ENCODE measurements at regions of chr19 and their contacts with region 1.

Region 1: DNA sequence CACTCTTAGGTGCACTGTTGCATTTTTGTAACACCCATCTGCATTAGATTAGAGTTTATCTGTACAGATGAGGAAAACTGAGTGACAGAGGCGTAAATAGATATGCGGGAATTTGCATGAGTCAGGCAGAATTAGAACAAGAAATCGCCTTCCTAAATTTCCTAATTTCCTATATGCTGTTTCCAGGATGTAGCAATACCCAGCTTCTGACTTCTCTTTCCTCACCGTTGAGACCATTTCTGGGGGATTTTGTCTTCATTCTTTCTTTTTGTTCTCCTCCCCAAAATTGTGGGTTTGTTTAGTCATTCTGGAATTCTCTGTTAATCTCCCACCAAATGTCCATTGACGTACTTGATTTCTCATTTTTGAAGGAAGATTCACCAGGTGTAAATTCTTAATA is 10.6 kb upstream of the ZNF792 start:
- DNase-seq: no peak
- H3K4me3 ChIP-seq: no peak overlapping the region
- H3K27ac ChIP-seq: no peak overlapping the region
- H3K4me1 ChIP-seq: no peaks in the 10 kb centered on the region
- H3K27me3 ChIP-seq: peaks cover 6% of the 10 kb centered on the region; the same call in 1 of the 2 replicates
- CTCF ChIP-seq: no peak
- EP300 ChIP-seq: no peak
- RAD21 ChIP-seq: no peak

Region 2: GRCh38 chr19:34838753-34839431 is 135.8 kb before region 1 on chr19:
- CTCF ChIA-PET with region 1: interaction called, 10 read pairs
- POLR2A ChIA-PET with region 1: no interaction called
- DNase-seq: no peak
- H3K4me3 ChIP-seq: no peak overlapping the region; a peak in 1 of 4 replicates
- H3K27ac ChIP-seq: peak overlapping the region in 1 of 2 experiments; percentile 98; a peak in 2 of 4 replicates
- H3K4me1 ChIP-seq: peaks cover 0 to 35% of the 10 kb centered on the region in 2 experiments; a peak in 2 of 4 replicates
- H3K27me3 ChIP-seq: no peaks in the 10 kb centered on the region
- CTCF ChIP-seq: no peak
- EP300 ChIP-seq: no peak
- RAD21 ChIP-seq: no peak

Region 3: GRCh38 chr19:34910770-34911169 is 63.9 kb before region 1 on chr19:
- CTCF ChIA-PET with region 1: no interaction called
- POLR2A ChIA-PET with region 1: no interaction called
- DNase-seq: no peak
- H3K4me3 ChIP-seq: no peak overlapping the region
- H3K27ac ChIP-seq: no peak overlapping the region
- H3K4me1 ChIP-seq: no peaks in the 10 kb centered on the region
- H3K27me3 ChIP-seq: 0 out of 2 replicates have a peak, but pooled peaks cover 2% of the 10 kb centered on the region
- CTCF ChIP-seq: no peak
- EP300 ChIP-seq: no peak
- RAD21 ChIP-seq: no peak

Region 4: GRCh38 chr19:34936184-34936583 is 38.5 kb before region 1 on chr19:
- CTCF ChIA-PET with region 1: no interaction called
- POLR2A ChIA-PET with region 1: no interaction called
- DNase-seq: no peak
- H3K4me3 ChIP-seq: no peak overlapping the region
- H3K27ac ChIP-seq: no peak overlapping the region
- H3K4me1 ChIP-seq: no peaks in the 10 kb centered on the region
- H3K27me3 ChIP-seq: no peaks in the 10 kb centered on the region
- CTCF ChIP-seq: no peak
- EP300 ChIP-seq: no peak
- RAD21 ChIP-seq: no peak

Region 5: GRCh38 chr19:34963573-34964409 is 10.9 kb before region 1 on chr19 and contains the start of gene ZNF792:
- CTCF ChIA-PET with region 1: interaction called, 32 read pairs
- POLR2A ChIA-PET with region 1: no interaction called
- DNase-seq: peak; percentile 91
- H3K4me3 ChIP-seq: peak within 1 kb of the TSS; percentile 95
- H3K27ac ChIP-seq: peak within 1 kb of the TSS in 1 of 2 experiments; percentile 94; a peak in 2 of 4 replicates
- H3K4me1 ChIP-seq: peaks cover 0 to 21% of the 10 kb centered on the region in 2 experiments; a peak in 2 of 4 replicates
- H3K27me3 ChIP-seq: no peaks in the 10 kb centered on the region
- CTCF ChIP-seq: no peak
- EP300 ChIP-seq: no peak
- RAD21 ChIP-seq: no peak
- polyA plus RNA-seq, gene ZNF792: 1.5 and 2.1 TPM in 2 replicates

Region 6: GRCh38 chr19:34990578-34991192 is 16.0 kb after region 1 on chr19:
- CTCF ChIA-PET with region 1: interaction called, 24 read pairs
- POLR2A ChIA-PET with region 1: interaction called, 3 read pairs
- DNase-seq: no peak
- H3K4me3 ChIP-seq: no peak overlapping the region
- H3K27ac ChIP-seq: no peak overlapping the region
- H3K4me1 ChIP-seq: peaks cover 0 to 2% of the 10 kb centered on the region in 2 experiments; a peak in 1 of 4 replicates
- H3K27me3 ChIP-seq: no peaks in the 10 kb centered on the region
- CTCF ChIP-seq: no peak
- EP300 ChIP-seq: no peak
- RAD21 ChIP-seq: no peak

Region 7: DNA sequence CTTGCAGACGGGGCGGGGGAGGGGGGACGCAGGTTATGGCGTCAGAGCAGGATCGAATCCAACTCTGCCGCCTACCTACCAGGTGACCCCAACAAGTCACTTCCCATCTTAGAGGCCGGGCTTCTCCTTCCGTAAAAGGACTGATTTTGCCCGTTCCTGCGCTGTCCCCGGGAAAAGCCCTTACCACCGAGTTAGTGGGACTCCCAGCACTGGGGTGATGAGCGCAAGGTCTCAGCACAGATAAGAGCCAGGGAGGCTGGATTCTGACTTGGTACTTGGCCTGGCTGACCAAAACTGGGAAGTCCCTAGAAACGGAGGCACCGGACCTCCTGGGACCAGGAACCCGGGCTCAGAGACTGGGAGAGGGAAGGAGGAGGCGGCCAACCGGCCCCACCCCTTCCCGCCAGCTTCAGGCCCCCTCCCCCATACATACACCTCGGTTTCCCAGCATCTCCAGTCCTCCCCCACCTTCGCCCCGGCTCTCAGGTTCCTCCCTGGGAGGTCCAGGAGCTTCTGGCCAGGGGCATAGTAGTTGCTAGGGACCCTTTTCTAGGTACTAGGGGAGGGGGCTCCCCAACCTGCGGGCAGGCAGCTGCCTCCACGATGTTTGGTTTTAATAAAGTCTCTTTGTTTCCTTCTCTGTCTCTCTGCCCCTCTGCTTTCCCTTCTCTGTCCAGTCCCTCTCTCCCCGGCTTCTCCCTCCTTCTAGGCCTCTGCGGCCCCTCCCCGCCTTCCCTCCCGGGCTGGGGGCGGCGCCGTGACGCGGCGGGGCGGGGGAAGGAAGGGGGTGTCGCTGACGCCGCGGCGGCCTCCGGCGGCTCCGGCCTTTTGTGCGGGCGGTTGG is 25.1 kb after region 1 on chr19 and contains the start of gene GRAMD1A:
- CTCF ChIA-PET with region 1: interaction called, 11 read pairs
- POLR2A ChIA-PET with region 1: no interaction called
- DNase-seq: peak; percentile 98
- H3K4me3 ChIP-seq: peak within 1 kb of the TSS; percentile 68 to 79
- H3K27ac ChIP-seq: peak within 1 kb of the TSS; percentile 86 to 91
- H3K4me1 ChIP-seq: peaks cover 7 to 16% of the 10 kb centered on the region in 2 experiments; a peak in 2 of 4 replicates
- H3K27me3 ChIP-seq: no peaks in the 10 kb centered on the region
- CTCF ChIP-seq: no peak
- EP300 ChIP-seq: no peak
- RAD21 ChIP-seq: no peak
- polyA plus RNA-seq, gene GRAMD1A: 64.6 and 81.9 TPM in 2 replicates

Region 8: GRCh38 chr19:35006342-35007018 is 31.8 kb after region 1 on chr19:
- CTCF ChIA-PET with region 1: interaction called, 38 read pairs
- POLR2A ChIA-PET with region 1: no interaction called
- DNase-seq: no peak
- H3K4me3 ChIP-seq: no peak overlapping the region
- H3K27ac ChIP-seq: no peak overlapping the region
- H3K4me1 ChIP-seq: peaks cover 0 to 6% of the 10 kb centered on the region in 2 experiments; a peak in 2 of 4 replicates
- H3K27me3 ChIP-seq: no peaks in the 10 kb centered on the region
- CTCF ChIP-seq: no peak
- EP300 ChIP-seq: no peak
- RAD21 ChIP-seq: no peak

Region 9: DNA sequence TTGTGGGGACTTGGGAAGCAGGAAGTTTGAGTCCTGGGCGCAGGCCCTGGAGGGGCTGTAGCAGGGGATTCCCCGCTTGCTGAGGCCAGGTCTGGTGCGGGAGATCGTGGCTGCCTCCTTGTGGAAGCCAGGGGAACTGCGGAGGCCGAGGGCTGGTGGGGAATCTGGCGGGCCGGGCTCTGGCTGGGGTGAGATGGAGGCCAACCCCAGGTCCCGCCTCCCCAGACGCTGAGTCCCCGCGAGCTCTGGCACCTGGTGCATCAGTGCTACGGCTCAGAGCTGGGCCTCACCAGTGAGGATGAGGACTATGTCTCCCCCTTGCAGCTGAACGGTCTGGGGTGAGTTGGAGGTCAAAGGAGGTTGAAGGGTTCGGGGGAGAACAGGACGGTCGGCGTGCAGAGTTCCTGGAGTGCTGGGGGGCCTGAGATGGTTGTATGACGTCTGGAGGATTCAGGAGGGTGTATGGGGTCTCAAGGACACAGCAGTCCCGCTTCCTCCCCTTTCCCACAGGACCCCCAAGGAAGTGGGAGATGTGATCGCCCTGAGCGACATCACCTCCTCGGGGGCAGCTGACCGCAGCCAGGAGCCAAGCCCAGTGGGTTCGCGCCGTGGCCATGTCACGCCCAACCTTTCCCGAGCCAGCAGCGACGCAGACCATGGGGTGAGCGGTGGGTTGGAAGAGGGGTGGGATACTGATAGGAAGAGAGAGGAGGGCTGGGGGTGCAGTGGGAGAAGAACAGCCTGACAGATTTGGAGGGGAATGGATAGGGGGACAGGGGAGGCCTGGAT is 38.6 kb after region 1 on chr19:
- CTCF ChIA-PET with region 1: interaction called, 38 read pairs
- POLR2A ChIA-PET with region 1: no interaction called
- DNase-seq: peak; percentile 94
- H3K4me3 ChIP-seq: peak overlapping the region in 1 of 2 experiments; percentile 49; a peak in 1 of 4 replicates
- H3K27ac ChIP-seq: peak overlapping the region in 1 of 2 experiments; percentile 37; a peak in 1 of 4 replicates
- H3K4me1 ChIP-seq: peaks cover 0 to 5% of the 10 kb centered on the region in 2 experiments; a peak in 1 of 4 replicates
- H3K27me3 ChIP-seq: no peaks in the 10 kb centered on the region
- CTCF ChIP-seq: peak; percentile 86
- EP300 ChIP-seq: no peak
- RAD21 ChIP-seq: peak; percentile 78

Region 10: DNA sequence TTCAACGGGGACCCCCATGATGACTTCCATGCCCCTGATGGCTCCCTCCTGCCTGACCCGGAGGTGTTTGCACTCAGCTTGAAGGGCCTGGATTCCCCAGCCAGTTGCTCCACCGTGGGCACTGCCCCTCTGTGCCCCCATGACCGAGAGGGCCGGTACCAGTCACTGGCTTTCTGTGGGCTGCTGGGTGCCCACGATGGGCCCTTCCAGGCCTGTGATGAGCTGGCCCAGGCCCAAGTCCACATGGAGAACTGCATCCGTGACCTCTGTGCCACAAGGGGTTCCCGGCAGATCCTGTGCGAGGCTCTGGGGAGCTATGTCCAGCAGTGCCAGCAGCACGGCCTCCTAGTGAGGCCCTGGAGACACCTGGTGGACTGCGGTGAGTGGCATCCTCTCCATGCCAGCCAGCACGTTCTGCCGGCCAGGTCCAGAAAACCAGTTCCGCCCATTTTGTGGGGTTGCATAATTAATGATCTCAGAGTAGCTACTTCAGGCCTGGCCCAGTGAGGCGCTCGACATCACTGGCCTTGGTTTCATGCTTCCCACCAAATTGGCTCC is 106.0 kb after region 1 on chr19:
- CTCF ChIA-PET with region 1: no interaction called
- POLR2A ChIA-PET with region 1: no interaction called
- DNase-seq: no peak
- H3K4me3 ChIP-seq: no peak overlapping the region
- H3K27ac ChIP-seq: no peak overlapping the region
- H3K4me1 ChIP-seq: no peaks in the 10 kb centered on the region
- H3K27me3 ChIP-seq: no peaks in the 10 kb centered on the region
- CTCF ChIP-seq: no peak
- EP300 ChIP-seq: no peak
- RAD21 ChIP-seq: no peak